Thyroid gland (tissue), 4 donors: ENCODE measurements at regions of chr22 and their contacts with region 1.

Region 1: GRCh38 chr22:41403532-41404318 is 22.0 kb downstream of the TEF start:
- DNase-seq: peak; percentile 92 to 97
- H3K4me3 ChIP-seq: no peak overlapping the region
- H3K27ac ChIP-seq: peak overlapping the region in 1 of 3 donors; percentile 52
- H3K4me1 ChIP-seq: peaks cover 23 to 25% of the 10 kb centered on the region in 2 donors
- H3K27me3 ChIP-seq: no peaks in the 10 kb centered on the region
- CTCF ChIP-seq: peak; percentile 71 to 99 (median 98)
- POLR2A ChIP-seq: peak in 1 of 2 donors; percentile 21

Region 2: GRCh38 chr22:40766956-40767355 is 636.8 kb before region 1 on chr22:
- intact Hi-C with region 1: no loop called
- DNase-seq: no peak
- H3K4me3 ChIP-seq: no peak overlapping the region
- H3K27ac ChIP-seq: no peak overlapping the region
- H3K4me1 ChIP-seq: no peaks in the 10 kb centered on the region
- H3K27me3 ChIP-seq: no peaks in the 10 kb centered on the region
- CTCF ChIP-seq: no peak
- POLR2A ChIP-seq: no peak

Region 3: GRCh38 chr22:41285441-41285819 is 118.3 kb before region 1 on chr22:
- intact Hi-C with region 1: no loop called
- DNase-seq: peak; percentile 27 to 31
- H3K4me3 ChIP-seq: peak overlapping the region; percentile 36 to 89 (median 86)
- H3K27ac ChIP-seq: peak overlapping the region in 2 of 3 donors; percentile 80 to 98
- H3K4me1 ChIP-seq: peaks cover 21 to 27% of the 10 kb centered on the region in 2 donors
- H3K27me3 ChIP-seq: no peaks in the 10 kb centered on the region
- CTCF ChIP-seq: no peak
- POLR2A ChIP-seq: no peak

Region 4: DNA sequence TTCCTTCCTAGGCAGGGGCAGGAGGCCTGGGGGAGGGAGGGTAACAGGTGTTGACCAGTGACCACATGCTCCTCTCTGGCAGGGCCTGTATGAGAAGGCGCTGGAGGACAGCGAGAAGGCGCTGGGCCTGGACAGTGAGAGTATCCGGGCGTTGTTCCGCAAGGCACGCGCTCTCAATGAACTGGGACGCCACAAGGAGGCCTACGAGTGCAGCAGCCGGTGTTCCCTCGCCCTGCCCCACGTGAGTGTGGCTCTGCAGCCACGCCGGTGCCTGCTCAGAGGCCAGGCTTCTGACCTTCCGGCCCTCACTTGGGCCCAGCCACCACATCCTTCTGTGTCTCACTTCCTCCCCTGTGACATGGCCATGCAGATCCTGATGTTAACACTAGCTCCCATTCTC is 76.6 kb before region 1 on chr22:
- intact Hi-C with region 1: no loop called
- DNase-seq: no peak
- H3K4me3 ChIP-seq: no peak overlapping the region
- H3K27ac ChIP-seq: no peak overlapping the region
- H3K4me1 ChIP-seq: no peaks in the 10 kb centered on the region
- H3K27me3 ChIP-seq: no peaks in the 10 kb centered on the region
- CTCF ChIP-seq: no peak
- POLR2A ChIP-seq: no peak

Region 5: DNA sequence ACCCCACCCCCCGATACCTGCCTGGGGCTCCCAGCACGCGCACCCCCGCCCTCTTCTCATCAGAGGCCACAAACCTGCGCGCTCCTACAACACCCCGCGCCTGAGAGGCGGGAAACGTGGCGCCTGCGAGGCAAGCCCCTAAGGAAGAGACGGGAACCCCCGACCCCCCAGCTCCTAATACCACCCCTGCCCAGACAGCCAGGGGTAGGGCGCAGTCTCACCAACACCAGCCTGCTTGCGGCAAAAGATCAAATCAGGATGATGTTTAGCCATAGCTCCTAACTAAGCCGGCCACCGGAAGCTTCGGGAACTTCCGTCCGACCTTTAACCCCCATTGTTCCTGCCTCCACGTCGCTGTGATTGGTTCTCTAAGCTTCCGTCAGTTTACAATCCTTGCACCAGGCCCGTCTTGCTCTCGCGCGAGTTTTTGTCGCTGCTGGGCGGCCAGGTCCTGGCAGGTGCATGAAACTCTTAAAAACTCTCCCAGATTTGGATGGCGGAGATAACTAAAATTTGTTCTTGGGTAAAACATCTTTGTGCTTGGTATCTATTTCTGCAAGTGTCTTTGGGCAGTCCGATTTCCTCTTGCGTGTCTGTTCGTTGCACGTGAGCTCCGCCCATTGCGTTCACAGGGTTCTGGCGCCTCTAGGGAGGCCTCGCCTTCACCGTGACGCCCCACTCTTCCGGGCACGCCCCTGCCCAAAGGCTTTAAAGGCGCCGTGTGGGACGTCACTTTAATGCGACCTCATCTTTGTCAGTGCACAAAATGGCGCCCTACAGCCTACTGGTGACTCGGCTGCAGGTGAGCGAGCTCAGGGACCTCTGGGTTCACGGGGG is 64.9 kb after region 1 on chr22 and contains the starts of genes ACO2 and PHF5A:
- intact Hi-C with region 1: loop called (anchors 2 kb)
- DNase-seq: peak; percentile 96 to 98
- H3K4me3 ChIP-seq: peak within 1 kb of the TSS; percentile 72 to 98 (median 78)
- H3K27ac ChIP-seq: peak within 1 kb of the TSS; percentile 83 to 98 (median 92)
- H3K4me1 ChIP-seq: peaks cover 19 to 23% of the 10 kb centered on the region in 2 donors
- H3K27me3 ChIP-seq: no peaks in the 10 kb centered on the region
- CTCF ChIP-seq: no peak
- POLR2A ChIP-seq: peak in 1 of 2 donors; percentile 71
- total RNA-seq, gene ACO2: 81.3 to 205 (median 135) TPM
- total RNA-seq, gene PHF5A: 22.4 to 58.3 (median 39.4) TPM